Esophagus squamous epithelium (tissue), 5 donors: ENCODE measurements at regions of chr6 and their contacts with region 1.

Region 1: GRCh38 chr6:44096612-44097011 is 30.6 kb downstream of the MRPL14 start:
- DNase-seq: no peak
- H3K4me3 ChIP-seq: no peak overlapping the region
- H3K27ac ChIP-seq: no peak overlapping the region
- H3K4me1 ChIP-seq: peaks cover 0 to 5% (median 0%) of the 10 kb centered on the region in 3 donors
- H3K27me3 ChIP-seq: no peaks in the 10 kb centered on the region
- CTCF ChIP-seq: peak; percentile 72 to 87 (median 77)
- POLR2A ChIP-seq: no peak

Region 2: GRCh38 chr6:43926634-43927524 is 169.7 kb before region 1 on chr6:
- intact Hi-C with region 1: no loop called
- DNase-seq: no peak
- H3K4me3 ChIP-seq: no peak overlapping the region
- H3K27ac ChIP-seq: no peak overlapping the region
- H3K4me1 ChIP-seq: peaks cover 5 to 33% (median 13%) of the 10 kb centered on the region in 3 donors
- H3K27me3 ChIP-seq: no peaks in the 10 kb centered on the region
- CTCF ChIP-seq: peak in 1 of 6 experiments; percentile 18
- POLR2A ChIP-seq: no peak

Region 3: DNA sequence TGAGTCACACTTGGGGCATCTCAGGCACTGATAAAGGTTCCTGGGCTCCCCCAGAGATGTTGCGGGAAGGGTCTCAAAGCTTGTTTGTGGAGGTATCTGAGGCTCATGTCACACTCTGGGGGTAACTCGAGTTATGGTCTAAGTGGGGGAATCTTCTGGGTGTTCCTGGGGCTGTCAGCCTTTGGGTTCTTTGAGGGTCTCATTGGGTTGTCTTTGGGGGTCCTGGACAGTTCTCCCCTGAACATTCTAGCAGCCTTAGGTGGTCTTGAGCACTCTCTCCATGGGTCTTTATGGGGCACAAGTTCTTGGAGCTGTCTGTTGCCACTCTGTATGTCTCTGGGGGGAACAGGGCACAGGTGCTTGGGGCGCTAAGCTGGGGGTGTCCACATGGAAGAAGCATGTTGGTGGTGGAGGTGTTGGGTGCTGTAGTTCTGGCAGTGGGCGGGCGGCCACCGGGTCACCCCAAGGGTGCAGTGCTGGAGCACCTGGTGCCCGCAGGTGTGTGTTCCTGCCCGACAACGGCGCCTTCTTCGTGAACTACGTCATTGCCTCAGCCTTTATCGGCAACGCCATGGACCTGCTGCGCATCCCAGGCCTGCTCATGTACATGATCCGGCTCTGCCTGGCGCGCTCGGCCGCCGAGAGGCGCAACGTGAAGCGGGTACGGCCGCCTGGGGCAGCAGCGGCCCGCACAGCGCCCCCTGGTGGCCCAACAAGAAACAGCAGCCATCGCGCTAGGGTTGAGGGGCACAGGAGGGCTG is 54.9 kb after region 1 on chr6:
- intact Hi-C with region 1: loop called (anchors 2 kb)
- DNase-seq: no peak
- H3K4me3 ChIP-seq: peak overlapping the region in 1 of 4 donors; percentile 24
- H3K27ac ChIP-seq: no peak overlapping the region
- H3K4me1 ChIP-seq: peaks cover 0 to 7% (median 0%) of the 10 kb centered on the region in 3 donors
- H3K27me3 ChIP-seq: no peaks in the 10 kb centered on the region
- CTCF ChIP-seq: peak; percentile 96 to 99 (median 99)
- POLR2A ChIP-seq: no peak

Region 4: GRCh38 chr6:44257025-44257752 is 160.6 kb after region 1 on chr6 and contains the start of gene SLC35B2:
- intact Hi-C with region 1: loop called (anchors 10 kb)
- DNase-seq: no peak
- H3K4me3 ChIP-seq: peak within 1 kb of the TSS; percentile 70 to 98 (median 90)
- H3K27ac ChIP-seq: peak within 1 kb of the TSS; percentile 84 to 94 (median 90)
- H3K4me1 ChIP-seq: peaks cover 14 to 61% (median 14%) of the 10 kb centered on the region in 3 donors
- H3K27me3 ChIP-seq: no peaks in the 10 kb centered on the region
- CTCF ChIP-seq: peak; percentile 52 to 87 (median 72)
- POLR2A ChIP-seq: peak in 2 of 4 donors; percentile 71 to 74
- total RNA-seq, gene SLC35B2: 9.7 to 34.4 (median 21.2) TPM